IMR-90 (cell line): ENCODE measurements at regions of chr19 and their contacts with region 1.

Region 1: DNA sequence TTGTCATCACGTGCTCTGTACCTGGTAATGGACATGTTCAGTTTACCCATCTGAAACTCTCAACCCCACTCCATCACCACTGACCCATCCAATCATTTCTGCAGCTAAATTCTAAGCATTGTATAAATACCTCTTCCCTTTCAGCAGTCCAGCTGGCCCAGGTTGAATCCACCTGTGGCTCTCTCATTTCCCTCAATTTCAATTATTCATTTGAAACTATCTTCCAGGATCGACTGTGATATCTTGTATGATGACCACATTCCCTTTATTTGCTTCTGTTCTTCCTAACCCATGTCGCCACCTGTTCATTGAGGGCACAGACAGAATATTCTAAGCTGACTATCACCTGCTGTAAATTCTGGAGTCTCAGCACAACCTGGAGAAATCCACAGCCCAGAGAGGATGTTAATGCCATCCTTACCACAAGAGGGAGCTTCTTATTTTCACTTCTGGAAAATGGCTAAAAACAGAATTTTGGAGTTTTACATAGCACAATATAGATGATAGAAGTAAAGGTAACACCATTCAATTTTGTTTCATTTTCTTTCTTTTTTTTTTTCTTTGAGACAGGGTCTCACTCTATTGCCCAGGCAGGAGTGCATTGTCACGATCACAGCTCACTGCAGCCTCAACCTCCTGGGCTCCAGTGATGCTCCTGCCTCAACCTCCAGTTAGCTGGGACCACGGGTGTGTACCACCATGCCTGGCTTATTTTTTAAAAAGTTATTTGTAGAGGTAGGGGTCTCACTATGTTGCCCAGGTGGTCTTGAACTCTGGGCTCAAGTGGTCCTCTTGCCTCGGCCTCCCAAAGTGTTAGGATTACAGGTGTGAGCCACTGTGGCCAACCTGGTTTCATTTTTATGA is 38.6 kb downstream of the ZNF823 start:
- DNase-seq: peak; percentile 42
- ATAC-seq: peak; percentile 78
- H3K4me3 ChIP-seq: no peak overlapping the region
- H3K27ac ChIP-seq: no peak overlapping the region
- H3K4me1 ChIP-seq: no peaks in the 10 kb centered on the region
- H3K27me3 ChIP-seq: peaks cover 2% of the 10 kb centered on the region; the same call in 1 of the 2 replicates
- CTCF ChIP-seq: peak; percentile 67
- POLR2A ChIP-seq: no peak
- RAD21 ChIP-seq: peak; percentile 50

Region 2: DNA sequence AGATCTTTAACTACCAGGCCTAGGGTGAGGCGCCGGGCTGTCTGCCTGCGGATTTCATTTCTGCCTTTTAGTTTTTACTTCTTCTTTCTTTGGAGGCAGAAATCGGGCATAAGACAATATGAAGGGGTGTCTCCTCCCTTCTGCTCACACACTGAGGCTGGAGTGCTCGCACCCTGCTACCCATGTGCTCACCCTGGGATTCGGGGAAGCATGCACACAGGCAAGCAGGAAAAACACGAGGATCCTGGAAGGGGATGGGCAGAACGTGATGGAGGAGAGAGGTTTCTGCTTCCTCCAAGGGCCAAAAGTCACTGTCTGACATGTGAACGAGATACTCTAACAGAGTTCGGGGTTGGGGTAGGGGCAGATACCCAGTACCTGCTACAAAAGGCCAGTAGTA is 10.2 kb after region 1 on chr19:
- CTCF ChIA-PET with region 1: interaction called, 11 read pairs
- POLR2A ChIA-PET with region 1: no interaction called
- dilution Hi-C with region 1: no loop called
- in situ Hi-C with region 1: no loop called
- intact Hi-C with region 1: no loop called
- DNase-seq: no peak
- ATAC-seq: no peak
- H3K4me3 ChIP-seq: no peak overlapping the region
- H3K27ac ChIP-seq: no peak overlapping the region
- H3K4me1 ChIP-seq: no peaks in the 10 kb centered on the region
- H3K27me3 ChIP-seq: peaks cover under 1% of the 10 kb centered on the region; the same call in 1 of the 2 replicates
- CTCF ChIP-seq: no peak
- POLR2A ChIP-seq: no peak
- RAD21 ChIP-seq: no peak